Ovary (tissue), 10 donors: ENCODE measurements at regions of chr14 and their contacts with region 1.

Region 1: DNA sequence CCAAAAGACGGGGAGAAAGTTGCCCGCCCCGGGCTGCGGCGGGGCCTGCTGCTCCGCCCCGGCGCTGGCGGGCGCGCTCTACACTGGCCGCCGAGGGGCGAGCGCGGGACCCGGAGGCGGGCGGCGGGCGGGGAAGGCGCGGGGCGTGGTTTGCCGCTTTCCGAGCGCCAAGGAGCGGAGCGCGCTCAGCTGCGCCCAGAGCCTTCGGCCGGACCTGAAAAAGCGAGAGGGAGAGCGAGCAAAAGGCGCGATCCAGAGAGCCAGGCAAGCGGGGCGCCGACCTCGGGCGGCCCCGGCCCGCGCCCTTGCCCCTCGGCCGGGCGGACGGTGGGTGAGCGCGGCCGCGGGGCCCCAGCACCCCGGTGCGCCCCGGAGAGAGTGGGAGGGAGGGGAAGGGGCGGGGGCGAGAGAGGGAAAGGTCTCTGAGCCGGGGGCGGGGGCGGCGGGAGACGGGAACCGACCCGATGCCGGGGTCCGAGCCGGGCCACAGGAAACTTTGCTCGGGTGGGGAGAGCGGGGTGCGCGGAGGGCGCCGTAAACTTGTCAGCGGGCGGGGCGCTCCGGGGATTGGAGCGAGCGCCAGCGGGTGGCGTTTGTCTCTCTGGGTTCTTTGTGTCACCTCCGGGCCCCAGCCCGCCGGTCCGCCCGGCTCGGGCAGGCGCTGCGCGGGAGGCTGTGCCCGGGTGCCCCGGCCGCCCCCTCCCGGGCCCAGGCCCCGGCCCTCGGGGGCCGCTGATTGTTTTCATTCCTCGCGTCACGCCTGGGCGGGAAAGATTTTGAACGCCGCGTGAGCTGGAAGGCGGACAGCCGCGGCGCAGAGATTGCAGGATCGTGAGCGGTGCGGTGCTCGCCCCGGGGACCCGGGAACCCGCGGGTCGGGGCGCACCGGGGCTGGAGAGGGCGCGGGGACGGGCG is at the start of gene SYNE2:
- DNase-seq: peak; percentile 77 to 90 (median 84)
- H3K4me3 ChIP-seq: peak within 1 kb of the TSS; percentile 93
- H3K27ac ChIP-seq: peak within 1 kb of the TSS; percentile 75 to 93
- H3K4me1 ChIP-seq: peaks cover 9% of the 10 kb centered on the region
- H3K27me3 ChIP-seq: no peaks in the 10 kb centered on the region
- CTCF ChIP-seq: peak in 2 of 3 donors; percentile 44 to 47
- EP300 ChIP-seq: no peak
- POLR2A ChIP-seq: peak; percentile 58
- total RNA-seq, gene SYNE2: 106 to 262 (median 191) TPM

Region 2: GRCh38 chr14:63993992-63994391 is 140.9 kb after region 1 on chr14:
- intact Hi-C with region 1: loop called in 1 of 4 experiments (anchors 10 kb)
- DNase-seq: no peak
- H3K4me3 ChIP-seq: no peak overlapping the region
- H3K27ac ChIP-seq: no peak overlapping the region
- H3K4me1 ChIP-seq: no peaks in the 10 kb centered on the region
- H3K27me3 ChIP-seq: no peaks in the 10 kb centered on the region
- CTCF ChIP-seq: peak in 1 of 3 donors; percentile 17
- EP300 ChIP-seq: no peak
- POLR2A ChIP-seq: no peak